Naive thymus-derived CD4-positive, alpha-beta T cell (primary cell): ENCODE measurements at regions of chr4 and their contacts with region 1.

Region 1: GRCh38 chr4:159206427-159206871 is 103.6 kb downstream of the RAPGEF2 start:
- DNase-seq: peak in 3 of 9 donors; percentile 5 to 52 (median 8)
- ATAC-seq: peak; percentile 36
- H3K4me3 ChIP-seq: no peak overlapping the region
- H3K4me3 Mint-ChIP-seq: peak overlapping the region in 3 of 10 donors; percentile 6 to 70 (median 15)
- H3K27ac ChIP-seq: no peak overlapping the region
- H3K27ac Mint-ChIP-seq: peak overlapping the region in 4 of 9 donors; percentile 2 to 89 (median 16)
- H3K4me1 ChIP-seq: no peaks in the 10 kb centered on the region
- H3K4me1 Mint-ChIP-seq: peaks cover 9 to 41% (median 18%) of the 10 kb centered on the region in 7 donors
- H3K27me3 ChIP-seq: no peaks in the 10 kb centered on the region
- H3K27me3 Mint-ChIP-seq: no peaks in the 10 kb centered on the region

Region 2: GRCh38 chr4:158193171-158193749 is 1013.2 kb before region 1 on chr4:
- CTCF ChIA-PET with region 1: no interaction called
- POLR2A ChIA-PET with region 1: no interaction called
- intact Hi-C with region 1: loop called in 1 of 2 experiments (anchors 10 kb)
- DNase-seq: no peak
- ATAC-seq: peak; percentile 51
- H3K4me3 ChIP-seq: no peak overlapping the region
- H3K4me3 Mint-ChIP-seq: peak overlapping the region in 2 of 10 donors; percentile 6 to 32
- H3K27ac ChIP-seq: no peak overlapping the region
- H3K27ac Mint-ChIP-seq: no peak overlapping the region
- H3K4me1 ChIP-seq: no peaks in the 10 kb centered on the region
- H3K4me1 Mint-ChIP-seq: peaks cover 0 to 2% (median 0%) of the 10 kb centered on the region in 7 donors
- H3K27me3 ChIP-seq: no peaks in the 10 kb centered on the region
- H3K27me3 Mint-ChIP-seq: peaks cover 0 to 6% (median 3%) of the 10 kb centered on the region in 5 donors

Region 3: DNA sequence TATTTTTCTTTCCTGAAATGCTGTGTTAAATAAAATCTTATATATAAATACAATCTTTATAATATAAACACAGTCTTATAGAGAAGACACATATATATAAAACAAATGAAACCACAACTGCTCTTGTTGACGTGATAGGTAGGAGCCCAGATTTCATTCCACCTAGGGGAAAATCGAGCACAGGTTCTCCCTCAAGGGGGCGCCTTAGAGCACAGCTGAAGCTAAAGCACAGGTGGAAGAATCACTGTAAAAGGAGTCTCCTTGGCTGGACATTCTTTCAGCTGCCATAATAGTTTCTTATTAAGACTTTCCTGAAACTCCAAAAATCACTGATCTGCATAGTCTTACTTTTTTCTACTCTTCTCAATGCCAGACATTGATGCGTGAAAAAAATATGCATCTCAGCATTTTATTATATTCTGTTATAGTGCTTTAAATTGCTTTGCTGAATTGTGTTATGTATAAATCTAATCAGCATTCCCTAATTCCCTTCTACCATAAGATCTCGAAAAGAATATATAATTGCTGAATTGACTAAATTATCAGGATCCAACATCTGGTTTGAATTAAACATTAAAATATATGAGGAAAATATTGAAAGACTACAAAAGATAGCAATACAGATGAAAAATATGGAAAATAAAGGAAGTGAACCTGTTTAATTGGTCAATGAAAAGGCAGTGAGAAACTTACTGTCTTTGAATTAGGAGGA is 710.3 kb before region 1 on chr4:
- CTCF ChIA-PET with region 1: no interaction called
- POLR2A ChIA-PET with region 1: no interaction called
- intact Hi-C with region 1: loop called in 1 of 2 experiments (anchors 10 kb)
- DNase-seq: peak in 2 of 9 donors; percentile 1 to 32
- ATAC-seq: no peak
- H3K4me3 ChIP-seq: no peak overlapping the region
- H3K4me3 Mint-ChIP-seq: no peak overlapping the region
- H3K27ac ChIP-seq: no peak overlapping the region
- H3K27ac Mint-ChIP-seq: no peak overlapping the region
- H3K4me1 ChIP-seq: no peaks in the 10 kb centered on the region
- H3K4me1 Mint-ChIP-seq: no peaks in the 10 kb centered on the region
- H3K27me3 ChIP-seq: no peaks in the 10 kb centered on the region
- H3K27me3 Mint-ChIP-seq: peaks cover 0 to 16% (median 7%) of the 10 kb centered on the region in 5 donors

Region 4: DNA sequence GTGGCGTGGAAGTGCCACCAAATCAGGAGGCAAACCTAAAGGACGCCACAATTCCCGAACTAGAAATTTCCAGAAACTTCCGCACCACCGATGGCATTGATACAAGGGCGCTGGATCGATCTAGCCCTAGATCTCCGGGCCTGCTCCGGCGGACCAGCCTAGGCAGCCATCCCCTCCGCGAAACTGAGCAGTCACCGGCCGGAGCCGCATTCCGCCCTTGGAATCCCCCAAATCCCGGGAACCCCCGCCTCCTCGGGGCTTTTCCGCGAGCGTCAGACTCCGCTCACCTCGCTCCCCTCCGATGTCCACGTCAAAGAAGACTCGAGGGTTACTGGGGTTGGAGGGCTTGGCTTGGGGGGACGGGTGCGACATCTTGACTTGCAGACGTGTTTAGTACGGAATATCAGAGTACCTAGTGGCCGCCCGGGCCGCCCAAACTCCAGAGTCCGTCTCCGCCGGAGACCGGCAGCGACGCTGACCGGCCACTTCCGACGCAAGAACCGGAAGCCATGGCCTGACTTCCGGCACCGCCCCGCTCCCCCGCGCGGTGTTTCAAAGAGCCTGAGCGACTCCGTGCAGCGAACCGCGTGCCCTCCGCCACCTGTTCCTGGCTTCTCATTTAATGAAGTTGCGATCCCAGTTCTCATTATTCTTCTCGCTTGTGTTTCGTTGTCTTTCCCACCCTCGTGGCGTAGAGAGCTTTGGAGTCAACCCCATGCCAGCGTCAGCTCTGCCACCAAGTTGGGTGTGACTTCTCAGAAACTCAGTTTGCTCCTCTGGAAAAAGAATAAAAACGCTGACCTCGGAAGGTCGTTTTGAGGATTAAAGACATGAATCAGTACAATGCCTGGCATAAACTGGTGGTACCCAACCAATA is 483.3 kb before region 1 on chr4 and contains the start of gene PPID:
- CTCF ChIA-PET with region 1: no interaction called
- POLR2A ChIA-PET with region 1: no interaction called
- intact Hi-C with region 1: loop called in 1 of 2 experiments (anchors 1 kb)
- DNase-seq: peak; percentile 64 to 86 (median 71)
- ATAC-seq: peak; percentile 90
- H3K4me3 ChIP-seq: peak within 1 kb of the TSS; percentile 93
- H3K4me3 Mint-ChIP-seq: peak within 1 kb of the TSS; percentile 92 to 99 (median 98)
- H3K27ac ChIP-seq: peak within 1 kb of the TSS; percentile 89
- H3K27ac Mint-ChIP-seq: peak within 1 kb of the TSS; percentile 95 to 99 (median 99)
- H3K4me1 ChIP-seq: peaks cover 0 to 3% of the 10 kb centered on the region in 2 donors
- H3K4me1 Mint-ChIP-seq: peaks cover 16 to 47% (median 37%) of the 10 kb centered on the region in 7 donors
- H3K27me3 ChIP-seq: no peaks in the 10 kb centered on the region
- H3K27me3 Mint-ChIP-seq: peaks cover under 1 to 17% (median 7%) of the 10 kb centered on the region in 5 donors
- total RNA-seq, gene PPID: 13.4 to 46.1 (median 26.5) TPM

Region 5: GRCh38 chr4:158768555-158769174 is 437.8 kb before region 1 on chr4 and contains the start of gene FNIP2:
- CTCF ChIA-PET with region 1: no interaction called
- POLR2A ChIA-PET with region 1: no interaction called
- intact Hi-C with region 1: loop called in 1 of 2 experiments (anchors 2 kb)
- DNase-seq: peak; percentile 69 to 83 (median 70)
- ATAC-seq: peak; percentile 90
- H3K4me3 ChIP-seq: peak within 1 kb of the TSS; percentile 68
- H3K4me3 Mint-ChIP-seq: peak within 1 kb of the TSS; percentile 92 to 100 (median 99)
- H3K27ac ChIP-seq: peak within 1 kb of the TSS; percentile 80
- H3K27ac Mint-ChIP-seq: peak within 1 kb of the TSS; percentile 90 to 99 (median 98)
- H3K4me1 ChIP-seq: peaks cover 0 to 8% of the 10 kb centered on the region in 2 donors
- H3K4me1 Mint-ChIP-seq: peaks cover 21 to 52% (median 43%) of the 10 kb centered on the region in 7 donors
- H3K27me3 ChIP-seq: no peaks in the 10 kb centered on the region
- H3K27me3 Mint-ChIP-seq: peaks cover 0 to 5% (median 0%) of the 10 kb centered on the region in 5 donors
- total RNA-seq, gene FNIP2: 9.8 to 19.5 (median 11.5) TPM

Region 6: DNA sequence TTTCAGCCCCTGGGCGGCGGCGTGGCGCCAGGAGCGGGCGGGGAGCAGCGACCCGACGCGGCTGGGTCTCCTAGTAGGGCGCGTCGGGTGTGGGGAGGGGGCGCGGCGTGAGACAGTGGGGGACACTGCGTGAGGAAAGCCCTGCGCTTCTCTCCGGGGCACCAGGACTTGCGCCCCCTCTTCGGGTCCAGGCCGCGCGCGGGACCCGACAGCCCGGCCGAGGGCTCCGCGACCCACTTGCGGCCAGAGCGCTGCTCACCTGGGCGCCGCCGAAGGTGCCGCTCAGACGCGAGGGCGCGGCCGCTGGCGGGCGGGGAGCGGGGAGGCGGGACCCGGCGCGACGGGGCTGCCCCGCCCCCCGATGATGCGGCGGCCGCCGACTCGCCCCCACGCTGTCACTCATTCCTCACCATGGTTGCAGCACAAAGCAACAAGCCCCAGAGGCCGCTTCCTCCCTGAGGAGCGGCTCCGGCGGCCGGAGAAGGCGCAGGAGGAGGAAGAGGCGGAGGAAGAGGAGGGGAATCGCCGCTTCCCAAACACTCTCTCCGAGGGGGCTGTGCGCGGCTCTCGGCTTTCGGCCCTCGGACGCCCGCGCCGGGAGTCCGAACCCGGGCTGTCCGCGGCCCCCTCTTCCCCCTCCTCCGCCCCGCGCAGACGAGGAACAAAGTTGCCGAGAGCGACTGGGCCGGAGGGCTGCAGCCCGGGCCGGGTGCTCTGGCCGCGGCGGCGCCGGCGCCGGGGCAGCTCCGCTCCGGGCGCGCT is 103.6 kb before region 1 on chr4 and contains the start of gene RAPGEF2:
- CTCF ChIA-PET with region 1: no interaction called
- POLR2A ChIA-PET with region 1: no interaction called
- intact Hi-C with region 1: loop called in 1 of 2 experiments (anchors 1 kb)
- DNase-seq: peak; percentile 82 to 89 (median 87)
- ATAC-seq: peak; percentile 94
- H3K4me3 ChIP-seq: peak within 1 kb of the TSS; percentile 63
- H3K4me3 Mint-ChIP-seq: peak within 1 kb of the TSS; percentile 82 to 92 (median 88)
- H3K27ac ChIP-seq: peak within 1 kb of the TSS; percentile 83
- H3K27ac Mint-ChIP-seq: peak within 1 kb of the TSS; percentile 66 to 93 (median 89)
- H3K4me1 ChIP-seq: peaks cover 8 to 20% of the 10 kb centered on the region in 2 donors
- H3K4me1 Mint-ChIP-seq: peaks cover 27 to 50% (median 38%) of the 10 kb centered on the region in 7 donors
- H3K27me3 ChIP-seq: no peaks in the 10 kb centered on the region
- H3K27me3 Mint-ChIP-seq: peaks cover 0 to 8% (median 0%) of the 10 kb centered on the region in 5 donors
- total RNA-seq, gene RAPGEF2: 19.1 to 35.2 (median 21.9) TPM

Region 7: DNA sequence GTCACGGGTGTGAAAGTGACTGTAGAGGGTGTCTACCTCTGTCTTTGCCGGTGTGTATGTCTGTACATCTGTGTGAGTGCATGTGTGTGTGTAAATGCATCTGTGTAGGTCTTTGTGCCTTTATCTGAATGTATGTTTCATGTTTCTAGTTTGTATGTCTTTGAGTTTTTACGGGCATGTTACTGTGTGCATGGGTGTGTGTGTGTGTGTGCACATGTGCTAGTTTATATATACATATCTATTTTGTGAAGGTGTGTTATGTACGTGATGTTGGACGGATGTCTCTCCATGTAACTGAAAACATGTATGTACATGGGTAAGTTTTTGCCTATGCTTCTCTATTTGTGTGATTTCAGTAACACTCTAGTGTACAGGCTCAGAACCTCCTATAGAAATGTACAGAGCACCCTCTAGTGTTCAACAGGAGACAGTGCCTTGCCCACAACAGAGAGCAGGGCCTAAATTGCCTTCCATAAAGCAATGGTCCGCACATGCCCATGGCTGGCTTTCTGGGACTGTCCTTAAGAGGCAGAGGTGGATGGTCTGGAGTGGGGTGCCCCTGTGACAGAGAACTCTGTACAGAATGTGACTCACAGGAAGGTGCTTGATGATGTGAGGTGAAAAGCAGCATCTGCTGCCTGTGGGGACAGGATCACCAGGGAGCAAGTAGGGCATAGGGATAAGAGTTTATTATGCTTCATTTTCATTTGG is 240.0 kb after region 1 on chr4:
- CTCF ChIA-PET with region 1: no interaction called
- POLR2A ChIA-PET with region 1: no interaction called
- intact Hi-C with region 1: loop called in 1 of 2 experiments (anchors 2 kb)
- DNase-seq: peak in 1 of 9 donors; percentile 24
- ATAC-seq: peak; percentile 87
- H3K4me3 ChIP-seq: no peak overlapping the region
- H3K4me3 Mint-ChIP-seq: no peak overlapping the region
- H3K27ac ChIP-seq: no peak overlapping the region
- H3K27ac Mint-ChIP-seq: no peak overlapping the region
- H3K4me1 ChIP-seq: no peaks in the 10 kb centered on the region
- H3K4me1 Mint-ChIP-seq: peaks cover 0 to 2% (median 0%) of the 10 kb centered on the region in 7 donors
- H3K27me3 ChIP-seq: no peaks in the 10 kb centered on the region
- H3K27me3 Mint-ChIP-seq: peaks cover 5 to 19% (median 11%) of the 10 kb centered on the region in 5 donors

Region 8: DNA sequence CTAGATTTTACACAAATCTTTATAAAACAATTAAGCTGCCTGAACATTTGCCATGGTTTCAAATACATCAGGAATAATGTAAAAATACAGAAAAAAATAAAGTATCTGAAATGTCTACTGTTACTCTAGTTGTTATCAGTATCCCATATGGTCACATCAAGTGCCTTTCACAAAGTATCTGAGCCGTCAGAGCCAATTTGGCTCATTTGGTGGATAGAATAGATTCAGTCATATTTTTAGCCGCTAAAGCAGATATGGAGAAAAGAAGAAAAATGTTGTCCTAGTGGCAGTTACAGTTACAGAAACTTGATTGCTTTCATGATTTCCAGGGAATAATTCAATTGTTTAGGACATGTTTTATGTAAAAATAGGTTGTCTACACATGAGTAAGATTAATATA is 537.5 kb after region 1 on chr4:
- CTCF ChIA-PET with region 1: no interaction called
- POLR2A ChIA-PET with region 1: no interaction called
- intact Hi-C with region 1: no loop called
- DNase-seq: no peak
- ATAC-seq: no peak
- H3K4me3 ChIP-seq: no peak overlapping the region
- H3K4me3 Mint-ChIP-seq: no peak overlapping the region
- H3K27ac ChIP-seq: no peak overlapping the region
- H3K27ac Mint-ChIP-seq: no peak overlapping the region
- H3K4me1 ChIP-seq: no peaks in the 10 kb centered on the region
- H3K4me1 Mint-ChIP-seq: no peaks in the 10 kb centered on the region
- H3K27me3 ChIP-seq: no peaks in the 10 kb centered on the region
- H3K27me3 Mint-ChIP-seq: no peaks in the 10 kb centered on the region